ENCODE measurements at regions of chr1 and their contacts with region 1.

Region 1: GRCh38 chr1:1307908-1308755 is at the starts of genes ACAP3 and PUSL1:
- DNase-seq: peak; percentile 86
- H3K4me3 Mint-ChIP-seq: peak within 1 kb of the TSS; percentile 88
- H3K27ac Mint-ChIP-seq: peak within 1 kb of the TSS; percentile 86
- H3K4me1 Mint-ChIP-seq: peaks cover 15% of the 10 kb centered on the region
- H3K27me3 Mint-ChIP-seq: no peaks in the 10 kb centered on the region
- total RNA-seq, gene ACAP3: 47.7 and 55.1 TPM in 2 replicates
- total RNA-seq, gene PUSL1: 34.6 and 36.8 TPM in 2 replicates

Region 2: DNA sequence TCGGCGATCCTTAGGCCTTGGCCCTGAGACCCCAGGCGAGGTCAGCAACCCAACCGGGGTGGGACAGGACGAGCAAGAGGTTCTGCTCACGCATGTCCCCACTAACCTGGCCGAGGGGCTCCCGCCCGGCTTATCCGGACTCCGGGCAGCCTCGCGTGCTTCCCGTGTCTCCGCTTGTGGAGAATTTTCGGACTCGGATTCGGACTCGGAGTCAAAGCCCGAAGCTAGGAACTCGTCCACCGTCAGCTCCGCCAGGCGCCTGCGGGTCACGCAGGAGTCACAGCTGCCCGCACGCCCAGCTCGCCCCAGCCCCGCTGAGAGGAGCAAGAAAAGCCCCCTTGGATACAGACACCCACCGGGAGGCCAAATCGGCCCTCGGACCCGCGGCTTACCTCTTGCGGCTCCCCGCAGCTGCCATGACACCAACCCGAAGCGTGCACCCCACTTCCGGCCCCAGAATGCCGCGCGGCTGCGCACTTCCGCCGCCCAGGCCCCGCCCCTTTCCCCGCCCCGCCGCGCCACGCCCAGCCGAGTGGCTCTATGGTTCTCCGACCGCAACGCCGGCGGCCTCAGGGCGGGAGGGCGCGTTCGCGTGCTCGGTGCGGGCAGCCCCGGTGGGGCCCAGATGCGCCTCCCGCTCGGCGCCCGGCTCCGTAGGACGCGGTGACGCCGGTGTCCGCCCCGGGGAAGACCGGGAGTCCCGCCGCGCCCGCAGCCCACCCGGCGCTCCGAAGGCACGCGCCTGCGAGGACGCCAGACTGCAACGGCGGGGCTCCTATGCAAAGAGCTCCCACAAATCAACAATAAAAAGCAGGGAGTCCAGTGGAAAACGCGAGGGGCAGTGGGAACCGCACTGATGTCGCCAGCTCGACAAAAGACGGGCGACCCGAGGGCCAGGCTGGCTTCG is 349.1 kb before region 1 on chr1 and contains the start of gene NOC2L:
- intact Hi-C with region 1: loop called (anchors 5 kb)
- DNase-seq: peak; percentile 88
- H3K4me3 Mint-ChIP-seq: peak within 1 kb of the TSS; percentile 97
- H3K27ac Mint-ChIP-seq: peak within 1 kb of the TSS; percentile 79
- H3K4me1 Mint-ChIP-seq: peaks cover 7% of the 10 kb centered on the region
- H3K27me3 Mint-ChIP-seq: peaks cover 2% of the 10 kb centered on the region
- total RNA-seq, gene NOC2L: 180 TPM in 2 replicates

Region 3: DNA sequence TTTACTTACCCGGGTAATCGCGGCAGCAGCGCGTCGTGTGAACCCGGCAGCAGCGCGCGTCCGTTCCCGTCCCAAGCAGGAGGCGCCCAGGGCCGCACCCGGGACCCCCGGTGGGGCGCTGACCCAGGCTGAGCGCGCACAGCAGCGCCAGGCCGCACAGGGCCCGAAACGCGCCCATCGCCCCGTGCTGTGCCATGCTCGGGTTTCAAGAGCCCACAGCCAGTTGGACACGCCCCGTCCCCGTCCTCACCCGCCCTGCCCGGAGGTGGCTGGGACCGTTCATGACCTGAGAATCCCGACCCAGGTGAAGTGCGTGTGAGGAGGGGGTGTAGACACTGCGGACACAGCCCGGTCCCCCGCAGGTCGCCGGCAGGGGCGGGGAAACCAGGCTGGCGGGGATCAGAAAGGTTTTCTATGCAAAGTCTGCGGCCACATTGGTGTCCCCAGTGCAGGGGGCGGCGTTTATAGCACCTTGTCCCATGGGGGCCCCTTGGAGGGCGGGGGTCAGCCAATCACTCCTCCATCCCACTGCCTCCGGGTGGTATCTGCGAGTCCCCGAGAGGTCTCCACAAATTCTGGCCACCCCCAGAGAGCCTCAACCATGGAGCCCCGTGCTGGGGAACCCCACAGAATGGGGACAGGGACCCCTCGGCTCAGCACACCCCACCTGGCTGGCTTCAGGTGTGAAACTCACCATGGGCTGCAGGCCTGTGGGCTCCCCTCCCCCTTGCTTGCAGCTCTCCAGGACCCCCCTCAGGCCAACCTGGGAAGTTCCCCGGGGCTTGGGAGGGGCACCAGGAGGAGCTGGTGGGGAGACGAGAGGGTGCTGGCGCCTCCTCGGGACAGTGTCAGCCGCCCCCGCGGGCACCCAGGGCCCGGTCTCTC is 101.5 kb before region 1 on chr1 and contains the start of gene TNFRSF18:
- intact Hi-C with region 1: loop called (anchors 5 kb)
- DNase-seq: peak; percentile 47
- H3K4me3 Mint-ChIP-seq: peak within 1 kb of the TSS; percentile 86
- H3K27ac Mint-ChIP-seq: peak within 1 kb of the TSS; percentile 99
- H3K4me1 Mint-ChIP-seq: peaks cover 24% of the 10 kb centered on the region
- H3K27me3 Mint-ChIP-seq: no peaks in the 10 kb centered on the region
- total RNA-seq, gene TNFRSF18: 350 and 356 TPM in 2 replicates

Region 4: DNA sequence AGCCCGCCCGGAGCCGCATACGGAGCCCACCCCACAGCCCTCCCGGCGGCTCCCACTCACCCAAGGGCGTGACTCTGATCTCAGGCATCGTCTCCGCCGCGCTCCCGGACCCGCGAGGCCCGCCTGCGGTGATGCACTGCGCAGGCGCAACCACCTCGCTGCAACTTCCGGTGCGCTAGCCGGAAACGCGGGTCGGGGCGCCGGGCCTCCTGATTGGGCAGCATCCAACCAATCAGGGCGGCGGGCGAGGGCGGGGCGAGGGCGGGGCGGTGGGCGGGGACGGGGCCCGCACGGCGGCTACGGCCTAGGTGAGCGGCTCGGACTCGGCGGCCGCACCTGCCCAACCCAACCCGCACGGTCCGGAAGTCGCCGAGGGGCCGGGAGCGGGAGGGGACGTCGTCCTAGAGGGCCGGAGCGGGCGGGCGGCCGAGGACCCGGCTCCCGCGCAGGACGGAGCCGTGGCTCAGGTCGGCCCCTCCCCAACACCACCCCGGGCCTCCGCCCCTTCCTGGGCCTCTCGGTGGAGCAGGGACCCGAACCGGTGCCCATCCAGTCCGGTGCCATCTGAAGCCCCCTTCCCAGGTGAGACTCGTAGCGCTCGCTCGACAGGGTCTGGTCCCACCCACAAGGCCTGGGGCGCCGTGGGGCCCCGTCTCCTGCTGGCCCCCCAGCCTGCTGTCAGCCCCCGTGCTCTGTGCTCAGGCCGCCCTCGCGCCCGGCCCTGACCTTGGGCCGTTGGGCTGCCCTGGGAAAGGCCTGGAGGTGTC is 16.6 kb after region 1 on chr1 and contains the starts of genes CPTP and INTS11:
- intact Hi-C with region 1: loop called (anchors 1 kb)
- DNase-seq: peak; percentile 95
- H3K4me3 Mint-ChIP-seq: peak within 1 kb of the TSS; percentile 95
- H3K27ac Mint-ChIP-seq: peak within 1 kb of the TSS; percentile 92
- H3K4me1 Mint-ChIP-seq: peaks cover 20% of the 10 kb centered on the region
- H3K27me3 Mint-ChIP-seq: no peaks in the 10 kb centered on the region
- total RNA-seq, gene CPTP: 13.6 and 14.6 TPM in 2 replicates
- total RNA-seq, gene INTS11: 144 and 147 TPM in 2 replicates

Region 5: GRCh38 chr1:1344672-1345361 is 36.7 kb after region 1 on chr1:
- intact Hi-C with region 1: no loop called
- DNase-seq: no peak
- H3K4me3 Mint-ChIP-seq: no peak overlapping the region
- H3K27ac Mint-ChIP-seq: no peak overlapping the region
- H3K4me1 Mint-ChIP-seq: peaks cover 12% of the 10 kb centered on the region
- H3K27me3 Mint-ChIP-seq: no peaks in the 10 kb centered on the region

Region 6: GRCh38 chr1:1399187-1399871 is 91.2 kb after region 1 on chr1 and contains the start of gene CCNL2:
- intact Hi-C with region 1: loop called (anchors 5 kb)
- DNase-seq: peak; percentile 99
- H3K4me3 Mint-ChIP-seq: peak within 1 kb of the TSS; percentile 95
- H3K27ac Mint-ChIP-seq: peak within 1 kb of the TSS; percentile 76
- H3K4me1 Mint-ChIP-seq: peaks cover 37% of the 10 kb centered on the region
- H3K27me3 Mint-ChIP-seq: no peaks in the 10 kb centered on the region
- total RNA-seq, gene CCNL2: 138 and 139 TPM in 2 replicates

Region 7: GRCh38 chr1:1615256-1616044 is 307.3 kb after region 1 on chr1 and contains the start of gene MIB2:
- intact Hi-C with region 1: loop called (anchors 2 kb)
- DNase-seq: peak; percentile 98
- H3K4me3 Mint-ChIP-seq: peak within 1 kb of the TSS; percentile 92
- H3K27ac Mint-ChIP-seq: peak within 1 kb of the TSS; percentile 99
- H3K4me1 Mint-ChIP-seq: peaks cover 25% of the 10 kb centered on the region
- H3K27me3 Mint-ChIP-seq: no peaks in the 10 kb centered on the region
- total RNA-seq, gene MIB2: 29.5 and 32.8 TPM in 2 replicates